ENCODE measurements at regions of chr10 and their contacts with region 1.

Region 1: DNA sequence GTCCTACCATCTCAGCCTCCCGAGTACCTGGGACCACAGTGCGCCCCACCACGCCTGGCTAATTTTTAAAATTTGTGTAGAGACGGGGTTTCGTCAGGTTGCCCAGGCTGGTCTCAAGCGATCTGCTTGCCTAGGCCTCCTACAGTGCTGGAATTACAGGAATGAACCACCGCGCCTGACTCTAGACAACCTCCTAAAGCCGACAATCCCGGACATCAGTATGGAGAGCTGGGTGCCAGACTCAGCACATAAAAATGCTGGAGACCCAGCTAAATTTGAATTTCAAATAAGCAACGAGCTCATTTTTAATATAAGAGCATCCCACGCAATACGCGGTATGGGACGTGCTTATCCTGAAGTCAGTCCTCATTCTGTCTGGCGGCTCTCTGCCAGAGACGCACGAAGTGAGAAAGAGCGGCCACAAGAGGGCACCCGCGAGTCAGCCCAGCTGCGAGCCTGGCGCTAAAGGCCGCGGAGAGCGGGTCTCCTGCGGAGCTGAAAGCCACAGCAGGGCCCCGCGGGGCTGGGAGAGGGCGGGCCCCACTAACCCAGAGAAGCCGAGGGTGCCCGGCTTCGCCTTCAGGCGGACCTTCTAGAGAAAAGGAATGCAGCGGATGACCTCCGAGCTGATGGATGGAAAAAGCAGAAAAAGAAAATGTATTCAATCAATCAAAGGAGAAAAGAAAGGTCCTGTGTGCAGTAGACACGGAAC is 7.0 kb downstream of the CALY start:
- DNase-seq: peak; percentile 91
- ATAC-seq: peak; percentile 86
- H3K4me3 Mint-ChIP-seq: no peak overlapping the region
- H3K27ac Mint-ChIP-seq: no peak overlapping the region
- H3K4me1 Mint-ChIP-seq: peaks cover 15% of the 10 kb centered on the region
- H3K27me3 Mint-ChIP-seq: peaks cover 48% of the 10 kb centered on the region
- CTCF ChIP-seq: peak; percentile 98

Region 2: GRCh38 chr10:133214468-133215410 is 114.9 kb before region 1 on chr10:
- CTCF ChIA-PET with region 1: no interaction called
- POLR2A ChIA-PET with region 1: no interaction called
- intact Hi-C with region 1: no loop called
- DNase-seq: no peak
- ATAC-seq: no peak
- H3K4me3 Mint-ChIP-seq: no peak overlapping the region
- H3K27ac Mint-ChIP-seq: no peak overlapping the region
- H3K4me1 Mint-ChIP-seq: no peaks in the 10 kb centered on the region
- H3K27me3 Mint-ChIP-seq: peaks cover 3% of the 10 kb centered on the region
- CTCF ChIP-seq: no peak

Region 3: DNA sequence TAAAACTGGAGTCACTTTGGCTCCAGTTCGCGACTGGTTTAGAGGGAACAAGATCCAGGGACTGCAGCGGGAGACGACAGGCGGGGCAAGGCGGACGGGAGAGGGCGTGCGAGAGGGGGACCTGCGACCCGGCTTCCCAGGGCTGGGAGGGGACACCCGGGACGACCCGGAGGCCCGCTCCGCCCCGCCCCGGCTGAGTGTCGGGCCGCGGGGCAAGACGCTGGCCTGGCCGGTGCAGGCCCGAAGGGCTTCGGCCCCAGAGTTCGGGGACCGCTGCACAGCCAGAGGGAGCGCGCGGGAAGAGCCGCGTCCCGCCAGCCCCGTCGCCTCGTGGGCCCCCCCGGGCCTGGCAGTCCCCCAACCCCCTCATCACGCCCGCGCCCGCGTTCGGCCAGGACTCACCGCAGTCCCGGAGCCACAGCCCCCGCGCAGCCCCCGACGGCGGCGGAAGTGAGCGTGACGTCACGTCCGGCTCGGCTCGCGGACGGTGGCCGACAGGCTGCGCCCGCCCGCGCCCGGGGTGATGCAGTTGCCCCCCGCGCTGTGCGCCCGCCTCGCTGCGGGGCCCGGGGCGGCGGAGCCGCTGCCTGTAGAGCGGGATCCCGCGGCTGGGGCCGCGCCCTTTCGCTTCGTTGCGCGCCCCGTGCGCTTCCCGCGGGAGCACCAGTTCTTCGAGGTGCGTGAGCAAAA is 21.1 kb before region 1 on chr10 and contains the starts of genes TUBGCP2 and ZNF511:
- CTCF ChIA-PET with region 1: interaction called, 22 read pairs
- POLR2A ChIA-PET with region 1: interaction called, 5 read pairs
- intact Hi-C with region 1: no loop called
- DNase-seq: peak; percentile 88
- ATAC-seq: peak; percentile 72
- H3K4me3 Mint-ChIP-seq: peak within 1 kb of the TSS; percentile 95
- H3K27ac Mint-ChIP-seq: peak within 1 kb of the TSS; percentile 98
- H3K4me1 Mint-ChIP-seq: peaks cover 29% of the 10 kb centered on the region
- H3K27me3 Mint-ChIP-seq: no peaks in the 10 kb centered on the region
- CTCF ChIP-seq: no peak
- total RNA-seq, gene TUBGCP2: 54.1 to 57.5 TPM
- total RNA-seq, gene ZNF511: 58.0 to 60.1 TPM

Region 4: GRCh38 chr10:133347710-133348517 is 18.3 kb after region 1 on chr10:
- CTCF ChIA-PET with region 1: interaction called, 14 read pairs
- POLR2A ChIA-PET with region 1: interaction called, 3 read pairs
- intact Hi-C with region 1: no loop called
- DNase-seq: no peak
- ATAC-seq: no peak
- H3K4me3 Mint-ChIP-seq: no peak overlapping the region
- H3K27ac Mint-ChIP-seq: no peak overlapping the region
- H3K4me1 Mint-ChIP-seq: peaks cover 7% of the 10 kb centered on the region
- H3K27me3 Mint-ChIP-seq: peaks cover 32% of the 10 kb centered on the region
- CTCF ChIP-seq: no peak

Region 5: DNA sequence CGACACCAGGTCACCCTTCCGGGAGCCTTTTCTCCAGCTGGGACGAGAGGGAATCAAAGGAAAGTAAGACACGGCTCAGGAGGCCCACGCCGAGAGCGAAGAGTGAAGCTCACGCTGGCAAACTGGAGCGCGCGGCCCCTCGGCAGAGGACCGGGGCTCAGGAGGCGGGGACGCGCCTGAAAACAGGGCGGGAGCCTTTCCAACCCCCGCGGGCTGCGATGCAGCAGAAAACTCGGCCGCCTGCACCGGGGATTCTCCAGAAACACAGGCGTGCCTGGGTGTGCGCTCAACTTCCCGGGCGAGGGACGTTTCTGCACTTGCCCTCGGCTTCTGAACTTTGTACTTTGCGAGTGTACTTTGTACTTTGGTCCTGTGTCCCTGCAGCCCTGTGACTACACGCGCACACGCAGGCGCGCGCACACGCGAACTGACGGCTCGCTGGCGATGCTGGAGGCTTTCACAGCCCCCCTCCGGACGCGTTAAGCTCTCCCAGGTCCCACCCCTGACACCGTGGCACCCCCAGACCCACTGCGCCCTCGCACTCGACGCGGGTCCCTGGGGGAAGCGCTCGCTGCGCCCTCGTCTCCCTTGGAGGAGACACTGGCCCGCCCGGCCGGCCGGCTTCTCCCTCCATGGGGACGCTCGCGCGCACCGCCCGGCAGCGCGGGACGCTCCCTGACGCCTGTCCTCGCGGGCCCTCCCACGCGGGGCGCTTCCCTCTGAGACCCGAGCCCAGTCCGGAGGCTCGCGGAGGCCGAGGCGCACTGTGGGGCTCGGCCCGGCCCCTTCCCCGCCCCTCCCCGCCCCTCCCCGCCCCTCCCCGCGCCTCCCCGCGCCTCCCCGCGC is 48.8 kb after region 1 on chr10:
- CTCF ChIA-PET with region 1: interaction called, 10 read pairs
- POLR2A ChIA-PET with region 1: no interaction called
- intact Hi-C with region 1: no loop called
- DNase-seq: peak; percentile 70
- ATAC-seq: peak; percentile 41
- H3K4me3 Mint-ChIP-seq: peak overlapping the region; percentile 74
- H3K27ac Mint-ChIP-seq: no peak overlapping the region
- H3K4me1 Mint-ChIP-seq: peaks cover 7% of the 10 kb centered on the region
- H3K27me3 Mint-ChIP-seq: no peaks in the 10 kb centered on the region
- CTCF ChIP-seq: no peak

Region 6: GRCh38 chr10:133438711-133439273 is 109.1 kb after region 1 on chr10:
- CTCF ChIA-PET with region 1: interaction called, 27 read pairs
- POLR2A ChIA-PET with region 1: no interaction called
- intact Hi-C with region 1: no loop called
- DNase-seq: peak; percentile 41
- ATAC-seq: peak; percentile 45
- H3K4me3 Mint-ChIP-seq: no peak overlapping the region
- H3K27ac Mint-ChIP-seq: no peak overlapping the region
- H3K4me1 Mint-ChIP-seq: peaks cover 18% of the 10 kb centered on the region
- H3K27me3 Mint-ChIP-seq: peaks cover 9% of the 10 kb centered on the region
- CTCF ChIP-seq: peak; percentile 57